Activated T-helper 2 cell treated with anti-CD3 and anti-CD28 coated beads, Interferon-gamma antibody, Interleukin-2, Interleukin-4, amounts not matched to agents 10 μg/mL and 5 μg/mL and 100 μg/mL, durations not matched to agents 14 hours and 24 hours and 36 hours (primary cell): ENCODE measurements at regions of chr6 and their contacts with region 1.

Region 1: DNA sequence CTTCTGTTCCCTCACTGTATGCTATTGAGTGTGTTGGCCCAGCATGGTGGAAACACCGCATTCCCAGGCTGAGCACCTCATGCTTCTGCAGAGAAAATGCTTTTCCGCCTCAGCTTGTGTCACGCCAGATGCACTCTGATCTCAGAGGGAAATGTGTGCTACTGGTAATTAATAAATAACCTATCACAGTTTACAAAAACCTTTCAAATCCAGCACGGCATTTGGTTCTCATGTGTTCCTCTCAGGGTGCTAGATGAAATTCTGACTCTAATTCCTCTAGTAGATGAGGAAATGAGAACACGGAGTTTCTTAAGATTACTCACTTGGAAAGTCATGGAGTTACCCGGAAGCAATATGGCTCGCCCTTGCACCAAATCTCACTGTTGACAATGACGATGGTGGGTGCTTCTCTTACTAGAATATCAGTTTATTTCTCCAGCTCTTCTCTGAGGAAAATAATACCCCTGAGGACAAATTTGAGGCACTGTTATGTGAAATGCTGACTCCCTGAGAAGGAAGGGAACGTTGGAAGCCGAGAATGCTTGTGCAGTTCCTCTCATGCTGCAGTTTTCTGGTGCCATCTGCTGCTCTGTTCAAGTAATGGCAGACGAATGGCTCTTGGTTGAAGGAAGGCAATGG is 116.6 kb downstream of the RNF144B start:
- DNase-seq: no peak
- H3K4me3 Mint-ChIP-seq: no peak overlapping the region
- H3K27ac Mint-ChIP-seq: no peak overlapping the region
- H3K4me1 Mint-ChIP-seq: peaks cover 6% of the 10 kb centered on the region
- H3K27me3 Mint-ChIP-seq: peaks cover 33% of the 10 kb centered on the region

Region 2: GRCh38 chr6:18122124-18123093 is 381.3 kb before region 1 on chr6 and contains the start of gene NHLRC1:
- intact Hi-C with region 1: loop called (anchors 5 kb)
- DNase-seq: peak; percentile 66
- H3K4me3 Mint-ChIP-seq: peak within 1 kb of the TSS; percentile 59
- H3K27ac Mint-ChIP-seq: no peak within 1 kb of the TSS
- H3K4me1 Mint-ChIP-seq: peaks cover 13% of the 10 kb centered on the region
- H3K27me3 Mint-ChIP-seq: peaks cover 56% of the 10 kb centered on the region
- total RNA-seq, gene NHLRC1: 0.23 and 0.43 TPM in 2 replicates

Region 3: DNA sequence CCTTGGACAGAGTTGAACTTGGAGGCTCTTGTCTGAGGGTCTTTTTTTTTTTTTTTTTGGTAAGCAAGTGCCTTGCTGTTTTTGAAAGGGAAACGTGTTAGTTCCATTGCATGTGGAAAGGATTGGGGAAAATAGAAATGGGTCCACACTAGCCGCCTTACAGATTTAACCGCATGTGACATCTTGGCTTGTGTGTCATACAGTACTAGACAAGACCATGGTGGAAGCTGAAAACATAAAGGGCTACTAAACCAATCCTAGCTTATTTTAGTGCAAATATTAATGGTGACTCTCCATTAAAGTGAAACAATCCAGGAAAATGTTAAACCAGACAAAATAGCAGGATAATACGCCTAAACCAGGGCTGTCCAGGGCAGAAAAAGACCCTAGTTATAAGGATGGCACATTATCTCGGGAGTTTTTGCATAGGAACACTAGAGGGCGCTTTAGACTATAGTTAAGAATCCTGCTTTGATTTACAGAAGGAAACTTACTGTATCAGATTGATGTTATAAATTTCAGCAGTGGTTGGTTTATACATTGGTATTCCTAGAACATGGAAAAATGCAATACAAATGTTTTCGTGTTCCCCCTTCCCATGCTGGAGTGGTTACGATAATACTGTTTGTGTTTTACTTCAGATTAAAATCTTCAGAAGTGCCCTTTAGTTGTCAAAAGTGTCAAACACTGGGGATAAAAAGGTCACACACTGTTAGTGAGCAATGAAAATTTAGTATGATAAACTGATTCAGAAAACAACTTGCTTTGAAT is 179.6 kb before region 1 on chr6:
- intact Hi-C with region 1: loop called (anchors 1 kb)
- DNase-seq: no peak
- H3K4me3 Mint-ChIP-seq: no peak overlapping the region
- H3K27ac Mint-ChIP-seq: no peak overlapping the region
- H3K4me1 Mint-ChIP-seq: peaks cover 11% of the 10 kb centered on the region
- H3K27me3 Mint-ChIP-seq: peaks cover 6% of the 10 kb centered on the region

Region 4: GRCh38 chr6:18515767-18516166 is 12.1 kb after region 1 on chr6:
- intact Hi-C with region 1: loop called (anchors 1 kb)
- DNase-seq: no peak
- H3K4me3 Mint-ChIP-seq: no peak overlapping the region
- H3K27ac Mint-ChIP-seq: no peak overlapping the region
- H3K4me1 Mint-ChIP-seq: peaks cover 18% of the 10 kb centered on the region
- H3K27me3 Mint-ChIP-seq: peaks cover 23% of the 10 kb centered on the region

Region 5: GRCh38 chr6:18897350-18897749 is 393.6 kb after region 1 on chr6:
- intact Hi-C with region 1: no loop called
- DNase-seq: no peak
- H3K4me3 Mint-ChIP-seq: no peak overlapping the region
- H3K27ac Mint-ChIP-seq: no peak overlapping the region
- H3K4me1 Mint-ChIP-seq: no peaks in the 10 kb centered on the region
- H3K27me3 Mint-ChIP-seq: no peaks in the 10 kb centered on the region